ENCODE measurements at regions of chr7 and their contacts with region 1.

Region 1: DNA sequence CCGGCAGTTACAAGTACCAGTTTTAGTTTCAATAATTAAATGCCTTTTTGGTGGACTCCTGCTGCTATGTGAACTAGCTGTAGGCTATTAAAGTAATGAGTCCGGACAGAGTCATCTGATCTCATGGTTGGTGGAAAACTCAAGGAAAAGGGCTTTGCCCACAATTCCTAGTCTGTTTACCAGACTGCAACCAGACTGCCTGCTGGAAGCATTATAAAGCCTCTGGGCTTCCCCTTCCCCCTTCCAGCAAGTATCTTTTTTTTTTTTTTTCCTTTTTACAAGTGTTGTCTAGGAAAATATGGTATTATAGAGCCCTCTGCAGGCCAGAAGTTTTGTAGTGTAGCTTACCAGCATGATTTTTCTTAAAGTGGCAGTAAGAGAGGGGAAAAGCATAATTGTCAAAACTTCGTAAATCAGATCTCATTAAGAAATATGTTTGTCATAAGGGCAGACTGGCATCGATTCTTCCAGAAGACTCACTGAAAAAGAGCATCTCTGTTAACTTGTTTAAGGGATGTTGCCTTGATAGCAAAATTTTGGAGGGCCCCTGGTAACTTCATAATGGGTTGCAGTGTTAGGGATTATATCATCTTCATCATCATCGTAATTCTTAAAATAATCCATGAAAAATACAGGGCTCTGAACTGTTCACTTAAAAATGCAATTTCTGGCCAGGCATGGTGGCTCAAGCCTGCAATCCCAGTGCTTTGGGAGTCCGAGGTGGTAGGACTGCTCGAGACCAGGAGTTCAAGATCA is 181.3 kb downstream of the TAX1BP1 start:
- DNase-seq: peak in 1 of 2 donors; percentile 51
- ATAC-seq: peak in 7 of 8 donors; percentile 55 to 72 (median 62)
- H3K4me3 ChIP-seq: no peak overlapping the region
- H3K27ac ChIP-seq: no peak overlapping the region
- H3K4me1 ChIP-seq: peaks cover 0 to 35% (median 12%) of the 10 kb centered on the region in 9 donors
- H3K27me3 ChIP-seq: no peaks in the 10 kb centered on the region
- CTCF ChIP-seq: peak; percentile 12 to 75 (median 60)

Region 2: GRCh38 chr7:27204851-27205337 is 716.4 kb before region 1 on chr7:
- intact Hi-C with region 1: loop called in 5 of 10 experiments (anchors 2 to 10 kb)
- DNase-seq: no peak
- ATAC-seq: peak in 1 of 8 donors; percentile 34
- H3K4me3 ChIP-seq: peak overlapping the region in 3 of 10 donors; percentile 10 to 33 (median 10)
- H3K27ac ChIP-seq: no peak overlapping the region
- H3K4me1 ChIP-seq: peaks cover 0 to 38% (median 23%) of the 10 kb centered on the region in 9 donors
- H3K27me3 ChIP-seq: peaks cover 53 to 100% (median 99%) of the 10 kb centered on the region in 7 donors
- CTCF ChIP-seq: no peak

Region 3: DNA sequence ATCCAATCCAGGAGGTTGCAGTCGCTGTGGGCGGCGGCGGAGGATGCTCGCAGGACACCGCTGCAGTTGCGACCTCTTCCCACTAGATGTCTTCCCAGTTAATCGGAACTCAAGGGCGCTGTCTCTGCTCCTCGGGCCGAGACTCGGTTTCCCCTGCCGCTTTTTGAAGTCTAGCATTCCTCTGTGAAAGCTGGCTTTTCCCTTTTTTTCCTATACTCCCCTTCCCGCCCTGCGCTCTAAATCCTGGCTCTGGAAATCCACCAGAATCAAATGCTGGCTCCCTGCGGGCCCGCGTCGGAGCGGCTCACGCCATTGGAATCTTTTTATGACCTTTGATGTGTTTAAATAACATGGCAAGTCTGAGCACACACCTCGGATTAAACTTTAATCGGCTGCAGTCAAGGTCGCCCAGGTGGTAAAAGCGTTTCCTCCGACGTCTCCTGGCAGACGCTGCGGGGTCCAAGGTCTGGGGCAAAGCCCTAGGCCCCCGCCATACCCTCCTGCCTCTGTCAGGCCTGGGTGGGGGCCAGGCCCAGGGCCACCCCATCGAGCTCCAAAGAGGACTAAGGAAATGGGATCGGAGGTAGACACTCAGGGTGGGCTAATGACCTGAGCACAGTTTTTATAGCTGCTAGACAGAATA is 710.7 kb before region 1 on chr7:
- intact Hi-C with region 1: loop called in 5 of 10 experiments (anchors 2 to 10 kb)
- DNase-seq: peak in 1 of 2 donors; percentile 44
- ATAC-seq: peak in 7 of 8 donors; percentile 51 to 75 (median 65)
- H3K4me3 ChIP-seq: peak overlapping the region in 7 of 10 donors; percentile 14 to 37 (median 21)
- H3K27ac ChIP-seq: no peak overlapping the region
- H3K4me1 ChIP-seq: peaks cover 3 to 27% (median 16%) of the 10 kb centered on the region in 9 donors
- H3K27me3 ChIP-seq: peaks cover 23 to 100% (median 99%) of the 10 kb centered on the region in 7 donors
- CTCF ChIP-seq: peak; percentile 54 to 79 (median 73)

Region 4: GRCh38 chr7:27697861-27698430 is 223.3 kb before region 1 on chr7:
- intact Hi-C with region 1: no loop called
- DNase-seq: no peak
- ATAC-seq: peak in 3 of 8 donors; percentile 39 to 58 (median 40)
- H3K4me3 ChIP-seq: no peak overlapping the region
- H3K27ac ChIP-seq: peak overlapping the region in 1 of 10 donors; percentile 83
- H3K4me1 ChIP-seq: peaks cover 0 to 32% (median 0%) of the 10 kb centered on the region in 9 donors
- H3K27me3 ChIP-seq: no peaks in the 10 kb centered on the region
- CTCF ChIP-seq: no peak

Region 5: DNA sequence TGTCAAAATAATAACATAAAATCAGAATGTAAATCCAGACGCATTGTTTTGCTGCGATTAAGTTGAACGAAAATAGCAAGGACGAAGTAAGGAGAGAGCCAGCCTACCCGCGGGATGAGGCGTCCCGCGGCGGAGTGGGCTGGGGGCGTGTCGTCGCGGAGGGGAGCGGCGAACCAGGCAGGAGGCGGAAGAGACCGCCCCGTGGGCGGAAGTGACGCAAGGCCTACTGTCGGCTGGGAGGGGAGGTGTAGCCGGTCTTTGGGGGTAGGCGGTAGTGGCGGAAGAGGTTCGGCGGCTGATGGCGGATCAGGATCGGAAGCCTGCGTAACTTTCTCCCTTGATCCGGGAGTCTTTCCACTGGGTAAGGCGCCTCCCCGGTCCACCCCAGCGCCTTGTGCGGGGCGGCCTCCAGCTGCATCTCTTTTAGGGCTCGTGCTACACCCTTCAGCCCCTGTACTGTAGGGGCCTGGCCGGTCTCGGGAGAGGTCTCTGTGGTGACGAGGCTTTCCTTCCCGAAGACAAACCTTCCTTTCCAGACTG is 181.3 kb before region 1 on chr7 and contains the start of gene TAX1BP1:
- intact Hi-C with region 1: loop called in 1 of 10 experiments (anchors 10 kb)
- DNase-seq: peak; percentile 97
- ATAC-seq: peak; percentile 100
- H3K4me3 ChIP-seq: peak within 1 kb of the TSS; percentile 70 to 94 (median 89)
- H3K27ac ChIP-seq: peak within 1 kb of the TSS; percentile 89 to 99 (median 96)
- H3K4me1 ChIP-seq: peaks cover 6 to 43% (median 27%) of the 10 kb centered on the region in 9 donors
- H3K27me3 ChIP-seq: no peaks in the 10 kb centered on the region
- CTCF ChIP-seq: no peak
- total RNA-seq, gene TAX1BP1: 153 to 190 (median 169) TPM

Region 6: DNA sequence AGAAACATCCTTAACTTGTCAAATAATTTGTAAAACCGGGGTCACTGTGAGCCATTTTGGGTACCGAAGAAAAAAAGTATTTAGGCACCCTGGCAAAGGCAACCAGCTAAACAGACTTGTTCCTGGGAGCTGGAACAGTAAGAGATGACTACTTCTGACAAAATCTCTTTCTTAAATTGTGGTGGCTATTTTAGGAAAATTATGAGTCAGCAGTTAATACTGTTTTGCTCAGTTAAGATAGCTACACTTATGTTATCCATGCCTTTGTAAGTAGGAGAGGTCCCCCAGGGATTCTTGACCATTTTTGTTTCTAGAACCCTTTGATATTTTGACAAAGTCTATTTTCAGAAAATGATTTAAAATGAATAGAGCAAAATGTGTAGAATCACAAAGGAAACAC is 112.6 kb before region 1 on chr7:
- intact Hi-C with region 1: loop called in 1 of 10 experiments (anchors 10 kb)
- DNase-seq: no peak
- ATAC-seq: peak in 7 of 8 donors; percentile 38 to 83 (median 80)
- H3K4me3 ChIP-seq: no peak overlapping the region
- H3K27ac ChIP-seq: peak overlapping the region in 5 of 10 donors; percentile 17 to 54 (median 41)
- H3K4me1 ChIP-seq: peaks cover 0 to 20% (median 9%) of the 10 kb centered on the region in 9 donors
- H3K27me3 ChIP-seq: no peaks in the 10 kb centered on the region
- CTCF ChIP-seq: no peak

Region 7: GRCh38 chr7:28096713-28097112 is 175.5 kb after region 1 on chr7:
- intact Hi-C with region 1: loop called in 2 of 10 experiments (anchors 10 kb)
- DNase-seq: peak in 1 of 2 donors; percentile 63
- ATAC-seq: peak in 7 of 8 donors; percentile 64 to 78 (median 74)
- H3K4me3 ChIP-seq: no peak overlapping the region
- H3K27ac ChIP-seq: peak overlapping the region in 2 of 10 donors; percentile 41 to 50
- H3K4me1 ChIP-seq: peaks cover 0 to 38% (median 10%) of the 10 kb centered on the region in 9 donors
- H3K27me3 ChIP-seq: no peaks in the 10 kb centered on the region
- CTCF ChIP-seq: peak; percentile 73 to 91 (median 84)